CD8-positive, alpha-beta T cell (primary cell): ENCODE measurements at regions of chr19 and their contacts with region 1.

Region 1: GRCh38 chr19:29245215-29245614 is 32.3 kb upstream of the UQCRFS1 start:
- DNase-seq: no peak
- ATAC-seq: no peak
- H3K4me3 ChIP-seq: no peak overlapping the region
- H3K4me3 Mint-ChIP-seq: no peak overlapping the region
- H3K27ac ChIP-seq: no peak overlapping the region
- H3K27ac Mint-ChIP-seq: no peak overlapping the region
- H3K4me1 ChIP-seq: no peaks in the 10 kb centered on the region
- H3K4me1 Mint-ChIP-seq: no peaks in the 10 kb centered on the region
- H3K27me3 ChIP-seq: no peaks in the 10 kb centered on the region
- H3K27me3 Mint-ChIP-seq: peaks cover 30% of the 10 kb centered on the region
- CTCF ChIP-seq: no peak

Region 2: DNA sequence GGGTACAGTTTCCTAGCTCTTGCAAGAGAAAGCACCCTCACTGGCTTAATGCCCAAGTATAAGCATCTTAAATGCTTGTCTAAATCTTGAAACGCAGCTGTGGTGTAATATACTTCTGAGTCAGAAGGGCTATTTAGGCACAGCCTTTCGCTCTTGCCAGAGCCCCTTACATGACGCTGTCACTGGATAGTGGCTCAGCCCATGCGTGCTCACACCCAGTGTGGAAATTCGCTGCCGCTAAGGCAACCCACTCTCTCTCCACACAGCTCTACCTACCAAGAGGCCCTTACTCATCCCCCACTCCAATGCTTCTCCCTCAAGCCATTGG is 56.2 kb before region 1 on chr19:
- CTCF ChIA-PET with region 1: no interaction called
- POLR2A ChIA-PET with region 1: no interaction called
- intact Hi-C with region 1: loop called in 1 of 2 experiments (anchors 2 kb)
- DNase-seq: no peak
- ATAC-seq: no peak
- H3K4me3 ChIP-seq: no peak overlapping the region
- H3K4me3 Mint-ChIP-seq: no peak overlapping the region
- H3K27ac ChIP-seq: no peak overlapping the region
- H3K27ac Mint-ChIP-seq: no peak overlapping the region
- H3K4me1 ChIP-seq: no peaks in the 10 kb centered on the region
- H3K4me1 Mint-ChIP-seq: peaks cover 4% of the 10 kb centered on the region
- H3K27me3 ChIP-seq: no peaks in the 10 kb centered on the region
- H3K27me3 Mint-ChIP-seq: peaks cover 2% of the 10 kb centered on the region
- CTCF ChIP-seq: no peak

Region 3: DNA sequence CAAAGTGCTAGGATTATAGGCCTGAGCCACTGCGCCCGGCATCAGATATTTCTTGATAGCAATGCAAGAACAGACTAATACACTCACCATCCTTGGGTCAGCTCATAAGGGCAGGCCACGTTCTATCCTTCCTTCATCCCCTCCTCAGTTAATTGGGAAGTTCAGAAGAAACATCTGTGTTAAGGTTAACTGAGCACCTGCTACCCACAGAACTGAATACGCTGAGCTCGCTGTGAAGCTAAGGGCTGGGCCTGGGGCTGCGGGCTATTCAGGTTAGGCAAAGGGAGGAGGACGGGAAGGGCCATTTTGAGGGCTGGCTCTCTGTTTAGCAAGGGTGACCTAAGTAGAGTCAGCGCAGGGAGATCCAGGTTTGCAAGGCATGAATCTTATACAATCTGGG is 10.7 kb after region 1 on chr19:
- CTCF ChIA-PET with region 1: no interaction called
- POLR2A ChIA-PET with region 1: no interaction called
- intact Hi-C with region 1: no loop called
- DNase-seq: no peak
- ATAC-seq: no peak
- H3K4me3 ChIP-seq: no peak overlapping the region
- H3K4me3 Mint-ChIP-seq: no peak overlapping the region
- H3K27ac ChIP-seq: no peak overlapping the region
- H3K27ac Mint-ChIP-seq: no peak overlapping the region
- H3K4me1 ChIP-seq: no peaks in the 10 kb centered on the region
- H3K4me1 Mint-ChIP-seq: no peaks in the 10 kb centered on the region
- H3K27me3 ChIP-seq: no peaks in the 10 kb centered on the region
- H3K27me3 Mint-ChIP-seq: peaks cover 10% of the 10 kb centered on the region
- CTCF ChIP-seq: no peak